ENCODE measurements at regions of chr6 and their contacts with region 1.

Region 1: GRCh38 chr6:110949679-110950285 is 8.7 kb upstream of the GTF3C6 start:
- DNase-seq: no peak
- ATAC-seq: peak; percentile 22

Region 2: GRCh38 chr6:110528101-110528929 is 421.5 kb before region 1 on chr6:
- intact Hi-C with region 1: loop called (anchors 5 kb)
- DNase-seq: no peak
- ATAC-seq: peak; percentile 90